ENCODE measurements at regions of chr1 and their contacts with region 1.

Region 1: GRCh38 chr1:234544087-234544579 is 65.2 kb upstream of the TARBP1 start:
- DNase-seq: no peak
- ATAC-seq: no peak
- H3K4me3 ChIP-seq: no peak overlapping the region
- H3K27ac ChIP-seq: no peak overlapping the region
- H3K4me1 ChIP-seq: no peaks in the 10 kb centered on the region
- H3K27me3 ChIP-seq: no peaks in the 10 kb centered on the region
- CTCF ChIP-seq: no peak
- EP300 ChIP-seq: no peak
- POLR2A ChIP-seq: no peak
- RAD21 ChIP-seq: no peak

Region 2: GRCh38 chr1:234528074-234528865 is 15.9 kb before region 1 on chr1:
- CTCF ChIA-PET with region 1: interaction called, 4 read pairs
- POLR2A ChIA-PET with region 1: interaction called, 3 read pairs
- RAD21 ChIA-PET with region 1: interaction called, 8 read pairs
- SMC1A ChIA-PET with region 1: interaction called, 20 read pairs
- in situ Hi-C with region 1: no loop called
- intact Hi-C with region 1: no loop called
- DNase-seq: no peak
- ATAC-seq: no peak; the same call in 2 of the 3 replicates
- H3K4me3 ChIP-seq: no peak overlapping the region
- H3K27ac ChIP-seq: no peak overlapping the region
- H3K4me1 ChIP-seq: peaks cover 12% of the 10 kb centered on the region
- H3K27me3 ChIP-seq: no peaks in the 10 kb centered on the region; a peak in 1 of 4 replicates
- CTCF ChIP-seq: no peak
- EP300 ChIP-seq: no peak
- POLR2A ChIP-seq: no peak
- RAD21 ChIP-seq: no peak